Activated T-helper 1 cell treated with anti-CD3 and anti-CD28 coated beads, Interleukin-12 subunit alpha, Interleukin-12 subunit beta, Interleukin-2, Interleukin-4 antibody, amounts not matched to agents 30 ng/mL and 10 ng/mL and 1 ng/mL, durations not matched to agents 14 hours and 24 hours and 36 hours (primary cell): ENCODE measurements at regions of chr6 and their contacts with region 1.

Region 1: DNA sequence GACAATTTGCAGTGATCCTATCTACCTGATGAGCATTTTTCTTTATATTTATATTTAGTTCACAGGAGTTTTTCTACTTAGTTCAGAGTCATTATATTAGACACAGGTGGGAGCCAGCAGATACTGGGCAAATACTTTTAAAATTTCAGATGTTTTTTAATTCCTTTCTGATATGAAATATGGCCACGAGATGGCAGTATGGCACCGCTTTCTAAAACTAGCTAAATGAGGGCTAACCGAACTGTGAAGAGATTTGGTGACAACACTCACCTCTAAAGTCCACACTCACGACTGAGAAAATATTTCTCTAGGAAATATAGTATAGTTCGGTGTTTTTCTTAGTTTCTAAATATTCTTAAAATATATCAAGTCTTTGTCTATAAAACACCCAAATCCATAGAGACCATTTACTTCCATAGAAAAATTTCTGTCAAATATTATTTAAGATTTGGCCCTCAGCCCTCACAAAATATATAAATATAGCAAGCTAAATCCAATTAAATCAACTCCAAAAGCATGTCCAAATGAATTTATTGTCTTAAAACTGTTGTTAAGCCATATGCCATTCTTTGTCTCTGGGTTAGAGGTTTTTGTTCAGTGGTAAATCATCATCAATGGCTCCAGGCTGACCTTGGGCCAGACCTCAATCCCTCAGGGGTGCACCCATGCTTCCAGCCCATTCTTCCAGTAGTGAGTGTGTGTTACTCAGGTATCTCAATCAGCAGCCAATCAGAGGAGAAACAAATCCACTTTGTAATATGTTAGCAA is 63.6 kb downstream of the HUS1B start:
- DNase-seq: peak; percentile 39
- H3K4me3 Mint-ChIP-seq: no peak overlapping the region
- H3K27ac Mint-ChIP-seq: no peak overlapping the region
- H3K4me1 Mint-ChIP-seq: peaks cover 13% of the 10 kb centered on the region
- H3K27me3 Mint-ChIP-seq: no peaks in the 10 kb centered on the region

Region 2: DNA sequence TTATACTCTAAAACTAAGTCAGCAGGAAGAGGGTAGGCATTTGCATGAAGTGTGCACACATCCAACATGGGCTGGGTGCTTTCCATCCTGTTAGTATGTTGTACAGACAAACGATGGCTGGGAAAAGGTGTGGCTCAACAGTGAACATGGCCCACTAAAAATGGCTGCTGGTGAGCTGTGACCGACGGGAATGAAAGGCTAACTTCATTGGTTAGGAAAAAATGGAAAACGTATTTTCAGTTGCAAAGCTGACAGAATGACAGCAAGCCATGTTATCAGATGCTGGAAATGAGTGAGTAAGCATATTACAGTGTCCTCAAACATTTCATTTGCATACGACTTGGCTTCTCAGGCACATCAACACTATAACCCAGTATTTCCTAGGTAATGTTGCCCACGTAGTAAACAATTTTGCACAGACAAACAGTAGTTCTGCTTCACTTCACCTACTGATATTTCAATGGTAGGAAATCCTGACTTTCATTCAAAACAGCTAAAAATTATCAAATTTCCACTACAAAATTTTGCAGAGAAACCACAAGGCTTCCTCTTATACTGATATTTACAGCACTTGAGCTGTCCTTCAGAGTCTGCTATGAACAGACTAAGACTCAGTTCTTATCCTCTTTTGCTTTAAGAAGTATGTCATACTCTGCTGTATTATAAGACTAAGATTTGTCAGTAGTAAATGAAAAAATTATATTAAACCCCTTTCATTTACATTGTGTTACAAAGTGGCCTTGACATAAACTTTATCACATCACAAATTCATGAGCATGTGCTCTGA is 102.9 kb before region 1 on chr6:
- intact Hi-C with region 1: no loop called
- DNase-seq: peak; percentile 40
- H3K4me3 Mint-ChIP-seq: peak overlapping the region; percentile 62
- H3K27ac Mint-ChIP-seq: peak overlapping the region; percentile 99
- H3K4me1 Mint-ChIP-seq: peaks cover 77% of the 10 kb centered on the region
- H3K27me3 Mint-ChIP-seq: no peaks in the 10 kb centered on the region

Region 3: GRCh38 chr6:722077-722524 is 128.8 kb after region 1 on chr6:
- intact Hi-C with region 1: loop called (anchors 1 kb)
- DNase-seq: peak; percentile 52
- H3K4me3 Mint-ChIP-seq: no peak overlapping the region
- H3K27ac Mint-ChIP-seq: no peak overlapping the region
- H3K4me1 Mint-ChIP-seq: no peaks in the 10 kb centered on the region
- H3K27me3 Mint-ChIP-seq: peaks cover 8% of the 10 kb centered on the region

Region 4: DNA sequence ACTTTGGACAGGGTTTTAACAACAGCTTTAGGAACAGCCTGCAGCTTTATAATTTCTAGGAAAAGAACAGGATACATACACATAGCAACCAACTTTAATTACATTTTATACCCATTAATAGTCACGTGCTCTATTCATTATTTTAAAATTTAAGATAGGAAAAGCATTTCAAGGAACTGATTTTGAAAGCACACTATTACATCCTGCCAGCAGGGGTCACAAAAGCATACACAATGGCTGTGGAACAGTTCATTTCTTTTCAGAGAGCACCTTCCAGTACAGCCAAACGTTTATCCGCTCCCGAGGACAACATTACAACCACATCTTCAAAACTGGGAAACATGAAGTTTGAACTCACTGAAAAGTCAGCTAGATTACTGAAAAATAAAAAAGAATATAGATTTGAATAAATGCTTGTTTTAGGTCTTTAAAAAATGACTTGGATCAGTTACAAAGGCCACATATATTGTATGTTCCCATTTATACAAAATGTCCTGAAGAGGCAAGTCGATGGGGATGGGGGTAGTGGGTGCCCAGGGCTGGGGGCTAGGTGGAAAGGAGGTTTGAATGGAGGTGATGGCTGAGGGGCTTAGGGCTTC is 204.3 kb after region 1 on chr6:
- intact Hi-C with region 1: loop called (anchors 1 kb)
- DNase-seq: no peak
- H3K4me3 Mint-ChIP-seq: no peak overlapping the region
- H3K27ac Mint-ChIP-seq: no peak overlapping the region
- H3K4me1 Mint-ChIP-seq: no peaks in the 10 kb centered on the region
- H3K27me3 Mint-ChIP-seq: peaks cover 48% of the 10 kb centered on the region

Region 5: GRCh38 chr6:1381481-1382330 is 788.4 kb after region 1 on chr6:
- intact Hi-C with region 1: loop called (anchors 2 kb)
- DNase-seq: peak; percentile 41
- H3K4me3 Mint-ChIP-seq: no peak overlapping the region
- H3K27ac Mint-ChIP-seq: no peak overlapping the region
- H3K4me1 Mint-ChIP-seq: peaks cover 20% of the 10 kb centered on the region
- H3K27me3 Mint-ChIP-seq: peaks cover 67% of the 10 kb centered on the region

Region 6: DNA sequence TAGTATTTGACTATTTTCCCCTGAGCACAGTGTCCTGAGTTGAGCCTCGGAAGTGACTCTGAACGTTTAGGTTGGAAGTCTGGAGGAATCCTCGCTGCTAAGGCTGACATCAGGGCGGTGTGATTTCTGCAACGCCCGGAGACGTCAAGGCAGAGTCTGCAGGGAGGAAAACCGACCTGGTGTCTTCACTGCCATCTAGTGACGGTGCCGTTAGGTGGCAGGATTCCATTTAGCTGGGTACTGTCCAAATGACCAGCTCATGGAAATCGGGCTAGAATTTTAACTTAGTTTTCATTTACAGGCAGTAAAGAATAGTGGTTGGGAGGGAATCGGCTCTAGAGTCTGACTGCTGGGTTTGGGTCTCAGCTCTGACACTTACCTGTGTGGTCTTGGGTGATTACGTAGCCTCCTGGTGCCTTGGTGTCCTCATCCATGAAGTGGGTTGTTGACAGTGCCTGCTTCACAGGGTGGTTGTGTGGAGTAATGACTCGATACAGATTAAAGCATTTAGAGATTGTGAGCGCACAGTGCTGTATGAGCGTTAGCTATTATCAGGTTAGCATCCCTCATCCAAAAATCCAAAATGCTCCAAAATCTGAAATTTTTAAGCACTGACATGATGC is 831.1 kb after region 1 on chr6:
- intact Hi-C with region 1: loop called (anchors 1 kb)
- DNase-seq: no peak
- H3K4me3 Mint-ChIP-seq: no peak overlapping the region
- H3K27ac Mint-ChIP-seq: no peak overlapping the region
- H3K4me1 Mint-ChIP-seq: no peaks in the 10 kb centered on the region
- H3K27me3 Mint-ChIP-seq: peaks cover 3% of the 10 kb centered on the region